ENCODE measurements at regions of chr9 and their contacts with region 1.

Region 1: DNA sequence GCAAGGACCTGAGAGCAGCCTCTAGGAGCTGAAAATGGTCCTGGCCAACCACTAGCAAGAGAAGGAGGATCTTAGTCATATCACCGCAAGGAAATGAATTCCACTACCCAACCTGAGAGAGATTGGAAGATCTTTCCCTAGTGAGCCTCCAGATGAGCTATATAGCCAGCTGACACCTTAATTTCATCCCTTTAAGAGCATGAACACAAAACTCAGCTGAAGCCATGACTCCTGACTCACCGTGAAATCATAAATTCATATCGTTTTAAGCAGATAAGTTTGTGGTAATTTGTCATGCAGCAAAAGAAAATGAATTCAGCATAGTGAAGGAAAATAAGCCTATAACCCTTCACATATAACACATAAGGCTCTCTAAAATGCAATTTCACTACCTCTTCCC is 23.5 kb downstream of the MAPKAP1 start:
- DNase-seq: no peak
- CTCF ChIP-seq: no peak

Region 2: GRCh38 chr9:125626187-125626586 is 57.3 kb before region 1 on chr9:
- in situ Hi-C with region 1: loop called (anchors 10 kb)
- DNase-seq: no peak
- CTCF ChIP-seq: no peak

Region 3: GRCh38 chr9:125942125-125942524 is 258.6 kb after region 1 on chr9:
- in situ Hi-C with region 1: no loop called
- DNase-seq: no peak
- CTCF ChIP-seq: no peak

Region 4: DNA sequence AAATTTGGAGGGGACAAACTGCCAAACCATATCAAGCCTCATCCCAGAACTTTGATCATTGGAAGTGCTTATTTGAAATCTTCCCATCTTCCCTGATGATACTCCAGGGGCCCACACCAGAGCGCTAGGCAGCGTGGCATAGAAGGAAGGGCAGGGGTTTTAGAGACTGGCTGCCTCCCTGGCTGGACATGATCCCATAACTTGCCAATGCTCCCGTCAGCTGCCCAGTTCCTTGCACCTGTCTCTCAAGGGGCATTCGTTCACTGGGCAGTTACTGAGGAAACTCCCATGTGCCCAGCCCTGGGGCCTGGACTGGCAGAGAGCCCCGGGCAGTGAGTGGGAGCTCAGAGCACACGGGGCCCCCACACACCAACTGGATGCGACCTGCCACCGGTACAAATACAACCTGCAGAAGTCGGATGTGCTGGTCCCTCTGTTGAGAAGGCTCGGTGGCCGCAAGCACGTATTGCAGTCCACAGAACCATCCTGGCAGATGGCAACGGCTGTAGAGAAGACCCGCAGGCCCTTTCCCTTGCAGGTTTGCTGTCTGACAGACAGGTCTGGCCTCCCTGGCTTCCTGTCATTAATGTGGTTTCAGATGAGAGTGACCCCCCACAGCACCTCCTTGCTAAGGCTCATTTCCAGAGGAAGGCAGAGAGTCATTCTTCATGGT is 765.5 kb after region 1 on chr9:
- in situ Hi-C with region 1: no loop called
- DNase-seq: no peak
- CTCF ChIP-seq: no peak